ENCODE measurements at regions of chr6 and their contacts with region 1.

Region 1: DNA sequence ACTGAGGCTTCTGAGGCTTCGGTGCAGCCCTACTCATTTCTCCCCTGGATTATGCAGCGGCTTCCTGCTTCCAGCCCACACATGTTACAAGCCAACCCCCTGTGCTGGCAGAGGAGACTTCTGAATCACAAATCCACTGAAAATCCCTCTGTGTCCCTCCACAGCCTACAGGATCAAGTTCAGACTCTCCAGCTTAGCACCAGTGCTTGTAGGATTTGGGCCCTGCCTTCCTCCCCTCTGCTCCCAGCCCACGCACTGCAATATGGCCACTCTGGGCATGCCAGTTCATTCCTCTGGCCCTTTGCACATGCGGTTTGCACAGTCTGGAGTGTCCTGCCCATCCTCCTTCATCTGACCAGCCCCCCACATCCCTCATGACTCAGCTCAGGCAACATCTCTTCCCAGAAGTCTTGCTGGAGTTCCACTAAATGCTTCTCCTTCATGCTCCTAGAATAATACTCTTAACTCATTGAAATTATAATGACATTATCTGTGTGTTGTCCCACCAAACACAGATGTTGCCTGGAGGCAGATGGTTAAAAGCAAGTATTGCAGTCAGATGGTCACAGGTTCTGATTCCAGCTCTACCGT is 15.9 kb upstream of the MDGA1 start:
- DNase-seq: no peak
- H3K4me3 ChIP-seq: no peak overlapping the region
- H3K27ac ChIP-seq: no peak overlapping the region
- H3K4me1 ChIP-seq: no peaks in the 10 kb centered on the region
- H3K27me3 ChIP-seq: no peaks in the 10 kb centered on the region
- CTCF ChIP-seq: no peak

Region 2: DNA sequence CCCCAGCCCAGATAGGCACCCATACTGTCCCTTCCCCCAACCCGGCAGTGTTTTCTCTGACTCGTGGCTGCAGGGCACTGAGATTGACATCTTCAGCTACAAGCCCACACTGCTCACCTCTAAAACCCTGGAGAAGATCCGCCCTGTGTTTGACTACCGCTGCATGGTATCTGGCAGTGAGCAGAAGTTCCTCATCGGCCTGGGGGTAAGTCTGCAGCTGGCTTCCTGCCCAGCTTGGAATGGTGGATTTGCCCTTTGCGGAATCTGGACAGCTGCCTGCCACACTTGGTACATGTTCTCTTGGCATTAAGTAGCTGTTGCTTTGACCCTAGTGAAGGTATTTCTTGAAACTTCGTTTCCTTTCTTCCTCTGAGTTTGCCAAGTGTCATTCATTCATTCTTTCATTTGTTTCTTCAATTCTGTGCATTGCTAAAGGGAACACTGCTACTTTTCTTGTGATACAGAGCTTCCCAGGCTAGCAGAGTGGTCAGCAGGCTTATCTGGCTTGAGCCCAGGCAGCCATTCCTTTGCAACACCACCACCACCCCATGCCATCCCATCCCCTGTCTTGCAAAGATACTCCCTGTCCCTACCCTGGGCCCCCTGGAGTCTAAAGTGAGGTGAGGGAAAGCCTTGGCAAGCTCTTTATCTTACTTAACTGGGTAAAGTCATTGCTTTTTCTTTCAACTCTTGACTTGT is 240.1 kb before region 1 on chr6:
- CTCF ChIA-PET with region 1: no interaction called
- POLR2A ChIA-PET with region 1: no interaction called
- intact Hi-C with region 1: no loop called
- DNase-seq: peak in 1 of 2 experiments; percentile 41
- H3K4me3 ChIP-seq: no peak overlapping the region
- H3K27ac ChIP-seq: no peak overlapping the region
- H3K4me1 ChIP-seq: no peaks in the 10 kb centered on the region
- H3K27me3 ChIP-seq: no peaks in the 10 kb centered on the region
- CTCF ChIP-seq: no peak

Region 3: DNA sequence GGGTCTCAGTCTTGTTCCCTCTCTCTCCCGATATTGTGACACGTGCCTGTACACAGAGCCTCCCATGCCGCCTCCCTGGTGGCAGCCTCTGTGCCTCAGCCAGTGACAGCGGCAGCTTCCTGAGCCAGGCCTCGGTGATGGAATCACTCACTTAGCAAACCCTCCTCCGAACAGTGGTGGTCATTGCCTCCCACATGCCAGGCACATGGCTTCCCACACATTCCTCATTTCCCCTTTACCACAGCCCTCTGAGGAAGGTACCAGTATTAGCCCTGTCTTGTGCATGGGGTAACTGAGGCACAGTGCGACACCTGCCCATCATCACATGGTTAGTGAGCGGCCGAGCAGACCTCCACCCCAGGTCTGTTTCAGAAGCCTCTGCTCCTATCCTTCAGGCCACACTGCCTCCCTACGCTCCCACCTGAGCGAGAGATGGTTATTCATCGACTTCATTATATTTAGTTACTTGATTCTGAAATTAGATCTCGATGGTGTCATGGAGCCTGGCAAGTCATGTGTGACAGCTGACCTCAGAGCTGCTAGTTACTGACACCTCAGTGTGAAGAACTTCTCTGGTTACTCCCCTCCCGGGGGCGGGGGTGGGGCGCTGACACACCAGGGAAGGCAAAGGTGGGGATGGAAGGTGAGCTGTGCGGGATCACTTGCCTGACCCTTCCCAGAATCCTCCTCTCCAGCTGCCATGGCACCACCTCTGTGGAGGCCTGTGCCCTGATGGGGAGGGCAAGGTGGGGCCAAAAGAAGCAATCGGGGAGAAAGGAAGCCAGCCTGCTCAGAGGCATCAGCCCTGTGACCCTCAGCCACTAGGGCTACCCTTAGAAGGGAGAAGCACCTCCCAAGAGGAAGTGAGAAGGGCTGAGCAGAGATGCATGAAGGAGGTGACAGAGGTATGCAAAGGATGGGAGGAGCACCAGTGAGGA is 33.8 kb before region 1 on chr6:
- CTCF ChIA-PET with region 1: no interaction called
- POLR2A ChIA-PET with region 1: no interaction called
- intact Hi-C with region 1: no loop called
- DNase-seq: peak in 1 of 2 experiments; percentile 37
- H3K4me3 ChIP-seq: no peak overlapping the region
- H3K27ac ChIP-seq: no peak overlapping the region
- H3K4me1 ChIP-seq: no peaks in the 10 kb centered on the region
- H3K27me3 ChIP-seq: no peaks in the 10 kb centered on the region
- CTCF ChIP-seq: no peak

Region 4: DNA sequence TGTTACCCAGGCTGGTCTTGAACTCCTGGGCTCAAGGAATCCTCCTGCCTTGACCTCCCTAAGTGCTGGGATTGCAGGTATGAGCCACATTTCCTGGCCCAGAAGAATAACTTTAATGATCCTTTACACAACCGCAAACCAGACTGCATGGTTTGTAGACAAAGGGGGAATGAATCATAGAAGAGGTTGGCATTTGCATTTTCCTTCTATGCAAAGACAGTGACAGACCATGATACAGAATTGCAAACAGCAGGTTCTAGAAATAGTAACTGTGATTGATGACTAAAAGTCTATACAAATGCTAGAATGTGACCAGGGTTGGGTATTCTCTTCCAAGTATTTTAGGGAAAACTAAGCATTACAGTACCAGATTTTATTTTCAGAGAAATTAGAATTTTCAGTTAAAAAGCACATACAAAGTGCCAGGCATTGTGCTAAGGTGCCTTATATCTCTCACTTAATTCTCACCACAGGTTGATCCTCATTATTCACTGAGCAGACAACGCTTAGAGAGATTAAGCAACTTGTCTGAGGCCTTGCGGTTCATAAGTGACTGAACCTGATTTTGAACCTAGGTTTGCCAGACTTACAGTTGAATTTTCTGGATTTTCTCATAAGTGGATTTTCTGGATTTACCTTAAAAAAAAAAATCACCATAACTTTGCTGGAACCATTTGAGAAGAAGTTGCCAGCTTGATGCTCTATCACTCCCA is 252.5 kb after region 1 on chr6:
- CTCF ChIA-PET with region 1: no interaction called
- POLR2A ChIA-PET with region 1: interaction called, 13 read pairs
- intact Hi-C with region 1: no loop called
- DNase-seq: peak in 1 of 2 experiments; percentile 3
- H3K4me3 ChIP-seq: no peak overlapping the region
- H3K27ac ChIP-seq: peak overlapping the region; percentile 17
- H3K4me1 ChIP-seq: peaks cover 19% of the 10 kb centered on the region
- H3K27me3 ChIP-seq: no peaks in the 10 kb centered on the region
- CTCF ChIP-seq: no peak

Measured in PC-9 (cell line).